ENCODE measurements at regions of chr5 and their contacts with region 1.

Region 1: DNA sequence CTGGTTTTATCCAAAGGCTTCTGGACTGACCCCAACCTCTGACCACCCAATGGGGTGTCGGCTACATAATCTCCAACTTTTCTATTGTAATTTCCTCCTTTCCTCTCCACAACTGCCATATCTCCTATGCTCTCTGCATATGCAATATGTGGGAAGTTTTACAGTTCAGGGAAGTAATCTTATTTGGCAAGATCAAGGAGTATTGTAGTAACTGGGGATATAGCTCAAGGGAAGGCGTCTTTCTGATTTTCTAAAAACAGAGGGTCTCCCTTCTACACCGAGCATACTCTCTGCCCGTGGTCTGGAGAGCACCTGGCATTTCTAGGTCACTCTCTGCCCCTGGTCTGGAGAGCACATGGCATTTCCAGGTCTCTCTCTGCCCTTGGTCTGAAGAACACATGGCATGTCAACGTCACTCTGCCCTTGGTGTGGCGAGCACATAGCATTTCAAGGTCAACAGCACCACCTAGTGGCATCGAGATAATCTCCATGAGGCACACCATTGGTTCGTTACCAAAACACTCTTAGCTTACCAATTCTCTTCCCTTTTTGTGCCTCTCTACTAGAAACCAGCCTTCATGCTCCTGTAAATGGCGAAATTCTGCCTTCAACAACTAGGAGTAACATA is 616.4 kb upstream of the NUDT12 start:
- DNase-seq: peak in 1 of 2 experiments; percentile 43
- H3K4me3 ChIP-seq: no peak overlapping the region
- H3K4me3 Mint-ChIP-seq: no peak overlapping the region
- H3K27ac Mint-ChIP-seq: no peak overlapping the region
- H3K4me1 ChIP-seq: no peaks in the 10 kb centered on the region
- H3K4me1 Mint-ChIP-seq: no peaks in the 10 kb centered on the region
- H3K27me3 ChIP-seq: no peaks in the 10 kb centered on the region
- H3K27me3 Mint-ChIP-seq: no peaks in the 10 kb centered on the region
- CTCF ChIP-seq: peak in 1 of 2 experiments; percentile 49

Region 2: DNA sequence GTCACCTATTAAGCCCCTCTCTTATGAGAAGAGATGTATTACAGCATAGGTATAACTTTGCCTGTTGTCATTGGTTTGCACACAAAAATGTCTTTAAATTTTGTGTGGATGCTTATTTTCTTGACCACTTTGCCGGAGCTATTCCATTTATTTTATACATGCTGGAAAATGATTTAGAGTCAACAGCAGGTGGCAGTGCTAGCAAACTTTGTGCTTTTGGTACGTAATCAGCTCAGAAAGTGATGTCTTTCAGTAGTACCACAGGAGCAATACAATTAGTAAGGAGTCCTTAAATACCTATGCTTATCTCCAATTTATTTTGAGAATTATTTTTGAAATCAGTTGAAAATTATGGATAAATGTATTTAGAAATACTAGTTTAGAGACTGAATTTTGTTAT is 596.6 kb before region 1 on chr5:
- CTCF ChIA-PET with region 1: no interaction called
- POLR2A ChIA-PET with region 1: no interaction called
- intact Hi-C with region 1: loop called (anchors 2 kb)
- DNase-seq: peak in 1 of 2 experiments; percentile 38
- H3K4me3 ChIP-seq: no peak overlapping the region
- H3K4me3 Mint-ChIP-seq: no peak overlapping the region
- H3K27ac Mint-ChIP-seq: no peak overlapping the region
- H3K4me1 ChIP-seq: no peaks in the 10 kb centered on the region
- H3K4me1 Mint-ChIP-seq: no peaks in the 10 kb centered on the region
- H3K27me3 ChIP-seq: no peaks in the 10 kb centered on the region
- H3K27me3 Mint-ChIP-seq: peaks cover 6% of the 10 kb centered on the region
- CTCF ChIP-seq: peak in 1 of 2 experiments; percentile 58

Region 3: DNA sequence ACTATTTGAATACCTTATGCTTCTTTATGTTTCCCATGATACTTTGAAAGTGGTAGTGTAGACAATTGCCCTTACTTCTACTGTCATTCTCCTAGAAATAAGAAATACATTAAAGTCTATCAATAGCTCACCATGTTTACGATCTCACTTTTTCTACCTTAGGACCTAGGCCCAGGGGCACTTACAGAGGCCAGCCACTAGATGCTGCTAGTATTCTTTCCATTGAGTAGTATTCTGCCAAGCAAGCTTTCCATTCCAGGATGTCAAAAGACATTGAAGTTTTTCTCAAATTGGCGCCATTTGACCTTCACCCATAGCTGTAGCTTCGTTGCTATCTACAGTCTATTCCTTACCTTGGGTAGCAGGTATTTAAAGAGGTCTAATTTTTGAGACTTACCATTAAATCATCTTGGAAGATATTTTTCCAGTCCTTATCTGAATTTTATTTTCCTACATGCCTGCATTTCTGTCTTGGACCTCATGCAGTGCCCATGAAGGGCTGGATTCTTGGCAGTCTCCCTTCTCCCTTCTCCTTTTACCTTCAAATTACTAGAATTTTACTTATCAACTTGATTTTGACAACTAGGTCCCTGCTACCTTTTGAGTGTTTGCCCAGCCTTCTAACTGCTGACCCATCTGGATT is 370.4 kb before region 1 on chr5:
- CTCF ChIA-PET with region 1: interaction called, 3 read pairs
- POLR2A ChIA-PET with region 1: no interaction called
- intact Hi-C with region 1: loop called (anchors 1 kb)
- DNase-seq: peak; percentile 38 to 64
- H3K4me3 ChIP-seq: no peak overlapping the region
- H3K4me3 Mint-ChIP-seq: no peak overlapping the region
- H3K27ac Mint-ChIP-seq: no peak overlapping the region
- H3K4me1 ChIP-seq: no peaks in the 10 kb centered on the region
- H3K4me1 Mint-ChIP-seq: no peaks in the 10 kb centered on the region
- H3K27me3 ChIP-seq: no peaks in the 10 kb centered on the region
- H3K27me3 Mint-ChIP-seq: no peaks in the 10 kb centered on the region
- CTCF ChIP-seq: peak; percentile 91 to 97

Region 4: GRCh38 chr5:103929338-103930003 is 249.5 kb before region 1 on chr5:
- CTCF ChIA-PET with region 1: no interaction called
- POLR2A ChIA-PET with region 1: no interaction called
- intact Hi-C with region 1: no loop called
- DNase-seq: no peak
- H3K4me3 ChIP-seq: no peak overlapping the region
- H3K4me3 Mint-ChIP-seq: no peak overlapping the region
- H3K27ac Mint-ChIP-seq: no peak overlapping the region
- H3K4me1 ChIP-seq: no peaks in the 10 kb centered on the region
- H3K4me1 Mint-ChIP-seq: no peaks in the 10 kb centered on the region
- H3K27me3 ChIP-seq: no peaks in the 10 kb centered on the region
- H3K27me3 Mint-ChIP-seq: peaks cover 5% of the 10 kb centered on the region
- CTCF ChIP-seq: no peak

Region 5: GRCh38 chr5:103942587-103943186 is 236.3 kb before region 1 on chr5:
- CTCF ChIA-PET with region 1: interaction called, 5 read pairs
- POLR2A ChIA-PET with region 1: no interaction called
- intact Hi-C with region 1: loop called (anchors 5 kb)
- DNase-seq: no peak
- H3K4me3 ChIP-seq: no peak overlapping the region
- H3K4me3 Mint-ChIP-seq: no peak overlapping the region
- H3K27ac Mint-ChIP-seq: no peak overlapping the region
- H3K4me1 ChIP-seq: no peaks in the 10 kb centered on the region
- H3K4me1 Mint-ChIP-seq: no peaks in the 10 kb centered on the region
- H3K27me3 ChIP-seq: no peaks in the 10 kb centered on the region
- H3K27me3 Mint-ChIP-seq: no peaks in the 10 kb centered on the region
- CTCF ChIP-seq: peak in 1 of 2 experiments; percentile 35

Measured in Caco-2 (cell line).